Caco-2 (cell line): ENCODE measurements at regions of chr17 and their contacts with region 1.

Region 1: DNA sequence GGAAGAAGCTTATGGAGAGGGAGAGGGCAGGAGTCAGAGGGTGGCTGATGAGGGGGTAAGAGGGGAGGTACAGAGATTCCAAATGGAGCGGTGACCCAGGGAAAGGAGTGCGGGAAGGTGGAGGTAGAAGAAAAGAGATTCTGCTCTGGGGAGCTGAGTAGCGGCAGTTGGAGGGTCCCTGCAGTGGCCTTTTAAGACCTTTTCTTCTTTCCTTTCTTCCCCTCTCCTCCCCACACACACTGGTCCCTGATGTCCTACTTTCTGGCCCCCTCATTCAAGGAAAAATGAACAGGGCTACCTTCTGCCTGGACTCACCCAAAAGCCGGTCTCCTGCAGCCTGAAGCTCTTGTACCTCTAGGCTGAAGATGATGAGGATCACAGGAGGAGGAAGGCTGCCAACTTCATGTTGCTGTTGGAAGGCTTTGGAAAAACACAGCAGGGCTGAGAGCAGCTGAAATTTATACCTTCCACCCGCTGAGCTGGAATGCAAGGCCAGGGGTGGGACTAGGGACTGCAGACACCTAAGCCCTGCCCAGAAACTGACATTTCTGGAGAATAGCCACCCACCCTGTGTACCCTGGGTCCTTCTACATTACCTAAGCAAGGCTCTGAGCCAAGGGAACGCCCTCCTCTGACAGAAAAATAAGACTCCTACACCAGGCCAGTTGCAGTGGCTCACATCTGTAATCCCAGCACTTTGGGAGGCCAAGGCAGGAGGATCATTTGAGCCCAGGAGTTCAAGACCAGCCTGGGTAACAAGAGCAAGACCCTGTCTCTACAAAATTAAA is 9.4 kb upstream of the HEATR6 start:
- DNase-seq: no peak
- H3K4me3 ChIP-seq: no peak overlapping the region
- H3K4me3 Mint-ChIP-seq: no peak overlapping the region
- H3K27ac Mint-ChIP-seq: no peak overlapping the region
- H3K4me1 ChIP-seq: no peaks in the 10 kb centered on the region; the same call in 1 of the 2 replicates
- H3K4me1 Mint-ChIP-seq: peaks cover 12% of the 10 kb centered on the region
- H3K27me3 ChIP-seq: no peaks in the 10 kb centered on the region
- H3K27me3 Mint-ChIP-seq: no peaks in the 10 kb centered on the region
- CTCF ChIP-seq: no peak

Region 2: DNA sequence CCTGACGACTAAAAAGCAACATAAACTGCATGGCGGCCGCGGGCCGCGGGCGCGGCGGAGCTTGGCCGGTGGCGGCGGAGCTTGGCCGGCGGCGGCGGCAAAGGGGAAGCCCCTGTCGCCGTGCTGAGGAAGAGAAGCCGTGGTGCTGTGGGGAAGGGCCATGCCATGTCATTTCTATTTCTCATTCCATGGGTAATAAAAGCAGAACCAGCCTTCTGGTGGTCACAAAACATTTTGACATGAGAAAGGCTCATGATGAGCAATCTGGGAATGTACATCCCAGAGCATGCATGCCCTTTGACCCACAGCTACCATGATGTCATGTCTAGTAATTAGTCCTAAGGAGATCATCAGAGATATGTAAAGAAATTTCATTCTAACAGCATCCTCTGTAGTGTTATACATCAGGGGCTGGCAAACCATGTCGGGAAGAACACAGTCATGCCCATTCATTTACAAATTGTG is 14.6 kb after region 1 on chr17:
- CTCF ChIA-PET with region 1: interaction called, 11 read pairs
- POLR2A ChIA-PET with region 1: no interaction called
- intact Hi-C with region 1: no loop called
- DNase-seq: peak in 1 of 2 experiments; percentile 39
- H3K4me3 ChIP-seq: peak overlapping the region; percentile 25
- H3K4me3 Mint-ChIP-seq: peak overlapping the region; percentile 63
- H3K27ac Mint-ChIP-seq: peak overlapping the region; percentile 63
- H3K4me1 ChIP-seq: 0 out of 2 replicates have a peak, but pooled peaks cover 3% of the 10 kb centered on the region
- H3K4me1 Mint-ChIP-seq: peaks cover 9% of the 10 kb centered on the region
- H3K27me3 ChIP-seq: no peaks in the 10 kb centered on the region
- H3K27me3 Mint-ChIP-seq: no peaks in the 10 kb centered on the region
- CTCF ChIP-seq: no peak